H1 (cell line): ENCODE measurements at regions of chr17 and their contacts with region 1.

Region 1: GRCh38 chr17:39547713-39548478 is 59.8 kb downstream of the NEUROD2 start:
- DNase-seq: peak in 1 of 2 experiments; percentile 98
- H3K4me3 ChIP-seq: no peak overlapping the region
- H3K27ac ChIP-seq: no peak overlapping the region
- H3K4me1 ChIP-seq: no peaks in the 10 kb centered on the region
- H3K27me3 ChIP-seq: no peaks in the 10 kb centered on the region
- CTCF ChIP-seq: peak; percentile 90 to 92 (median 92)
- EP300 ChIP-seq: no peak
- POLR2A ChIP-seq: no peak
- RAD21 ChIP-seq: peak; percentile 87 to 91

Region 2: GRCh38 chr17:39527220-39527813 is 20.6 kb before region 1 on chr17:
- CTCF ChIA-PET with region 1: interaction called, 19 read pairs
- POLR2A ChIA-PET with region 1: no interaction called
- DNase-seq: no peak
- H3K4me3 ChIP-seq: no peak overlapping the region
- H3K27ac ChIP-seq: no peak overlapping the region
- H3K4me1 ChIP-seq: no peaks in the 10 kb centered on the region
- H3K27me3 ChIP-seq: no peaks in the 10 kb centered on the region
- CTCF ChIP-seq: peak in 2 of 3 experiments; percentile 38 to 68; a peak in 2 of 4 replicates
- EP300 ChIP-seq: no peak
- POLR2A ChIP-seq: no peak
- RAD21 ChIP-seq: peak; percentile 30 to 42; a peak in 3 of 4 replicates

Region 3: DNA sequence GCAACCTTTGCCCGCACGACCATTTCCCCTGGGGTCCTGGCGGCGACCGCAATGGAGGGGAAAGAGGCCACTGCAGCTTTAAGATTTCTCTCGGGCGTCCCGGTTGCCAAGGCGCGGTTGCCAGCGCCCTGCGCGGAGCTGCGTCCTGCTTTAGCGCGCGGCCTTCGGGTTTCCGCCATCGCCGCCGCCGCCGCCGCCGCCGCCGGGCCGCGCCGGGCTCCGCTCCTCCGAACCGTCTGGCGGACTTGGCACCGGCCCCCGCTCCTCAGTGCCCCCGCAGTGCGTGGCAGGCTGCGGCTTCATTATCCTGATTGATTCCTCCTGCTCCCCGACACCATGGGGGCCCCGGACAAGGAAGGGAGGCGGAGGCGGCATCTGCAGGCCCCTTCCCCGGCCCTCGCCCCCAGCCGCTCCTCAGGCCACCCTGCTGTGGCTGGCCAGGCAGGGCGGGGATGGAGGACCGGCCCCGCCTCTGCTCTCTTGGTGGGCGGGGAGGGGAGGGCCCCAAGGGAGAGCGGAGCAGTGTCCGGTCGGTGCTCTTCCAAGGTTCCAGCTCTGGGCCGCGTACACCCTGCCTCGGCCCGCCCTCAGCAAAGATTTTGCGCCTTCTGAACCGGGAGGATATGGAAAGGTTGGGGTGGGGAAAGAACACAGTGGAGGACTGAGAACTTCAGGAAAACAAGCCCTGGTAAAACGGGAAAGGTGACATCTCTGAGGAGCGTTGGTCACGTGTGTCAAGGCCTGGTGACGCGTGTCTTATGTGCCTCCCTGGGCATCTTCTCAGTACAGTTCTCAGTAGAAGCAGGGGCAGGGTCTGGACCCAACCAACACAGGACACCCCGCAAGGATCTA is 25.8 kb after region 1 on chr17:
- CTCF ChIA-PET with region 1: interaction called, 216 read pairs
- POLR2A ChIA-PET with region 1: interaction called, 3 read pairs
- DNase-seq: peak in 1 of 2 experiments; percentile 84
- H3K4me3 ChIP-seq: peak overlapping the region; percentile 48 to 85 (median 56)
- H3K27ac ChIP-seq: no peak overlapping the region
- H3K4me1 ChIP-seq: peaks cover 2 to 12% (median 5%) of the 10 kb centered on the region in 4 experiments
- H3K27me3 ChIP-seq: peaks cover 0 to 4% (median 3%) of the 10 kb centered on the region in 4 experiments; a peak in 5 of 7 replicates
- CTCF ChIP-seq: no peak
- EP300 ChIP-seq: peak in 1 of 2 experiments; percentile 50; a peak in 1 of 3 replicates
- POLR2A ChIP-seq: no peak; a peak in 1 of 3 replicates
- RAD21 ChIP-seq: no peak

Region 4: DNA sequence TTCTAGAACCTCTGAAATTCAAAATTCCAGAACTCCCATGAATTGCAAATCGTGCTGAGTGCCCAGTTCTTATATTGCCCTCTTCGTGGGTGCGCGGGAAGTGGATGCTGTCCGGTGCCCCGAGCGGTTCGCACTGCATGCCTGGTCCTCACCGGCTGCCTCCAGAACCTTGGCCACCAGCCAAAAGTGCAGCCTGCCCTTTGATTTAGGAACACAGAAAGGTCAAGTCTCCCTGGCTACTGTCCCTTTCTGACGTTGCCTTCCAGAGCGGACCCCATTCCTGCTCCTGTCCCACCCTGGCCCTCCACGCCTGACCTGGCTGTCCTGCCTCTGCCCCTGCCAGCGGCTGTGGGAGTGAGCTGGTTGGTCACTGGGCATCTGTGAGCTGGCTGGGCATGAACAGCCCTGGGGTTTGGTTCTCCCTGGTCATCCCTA is 50.2 kb after region 1 on chr17:
- CTCF ChIA-PET with region 1: interaction called, 49 read pairs
- POLR2A ChIA-PET with region 1: interaction called, 5 read pairs
- DNase-seq: peak in 1 of 2 experiments; percentile 52
- H3K4me3 ChIP-seq: no peak overlapping the region
- H3K27ac ChIP-seq: no peak overlapping the region
- H3K4me1 ChIP-seq: peaks cover 5 to 39% (median 30%) of the 10 kb centered on the region in 4 experiments
- H3K27me3 ChIP-seq: peaks cover 78 to 100% (median 97%) of the 10 kb centered on the region in 4 experiments
- CTCF ChIP-seq: no peak
- EP300 ChIP-seq: no peak
- POLR2A ChIP-seq: no peak
- RAD21 ChIP-seq: no peak

Region 5: GRCh38 chr17:39621523-39622379 is 73.9 kb after region 1 on chr17:
- CTCF ChIA-PET with region 1: interaction called, 310 read pairs
- POLR2A ChIA-PET with region 1: interaction called, 5 read pairs
- DNase-seq: peak in 1 of 2 experiments; percentile 100
- H3K4me3 ChIP-seq: no peak overlapping the region
- H3K27ac ChIP-seq: no peak overlapping the region
- H3K4me1 ChIP-seq: peaks cover 0 to 20% (median 14%) of the 10 kb centered on the region in 4 experiments; a peak in 6 of 7 replicates
- H3K27me3 ChIP-seq: peaks cover 18 to 53% (median 50%) of the 10 kb centered on the region in 4 experiments
- CTCF ChIP-seq: peak; percentile 100
- EP300 ChIP-seq: peak in 1 of 2 experiments; percentile 49; a peak in 1 of 3 replicates
- POLR2A ChIP-seq: no peak
- RAD21 ChIP-seq: peak; percentile 96 to 97

Region 6: DNA sequence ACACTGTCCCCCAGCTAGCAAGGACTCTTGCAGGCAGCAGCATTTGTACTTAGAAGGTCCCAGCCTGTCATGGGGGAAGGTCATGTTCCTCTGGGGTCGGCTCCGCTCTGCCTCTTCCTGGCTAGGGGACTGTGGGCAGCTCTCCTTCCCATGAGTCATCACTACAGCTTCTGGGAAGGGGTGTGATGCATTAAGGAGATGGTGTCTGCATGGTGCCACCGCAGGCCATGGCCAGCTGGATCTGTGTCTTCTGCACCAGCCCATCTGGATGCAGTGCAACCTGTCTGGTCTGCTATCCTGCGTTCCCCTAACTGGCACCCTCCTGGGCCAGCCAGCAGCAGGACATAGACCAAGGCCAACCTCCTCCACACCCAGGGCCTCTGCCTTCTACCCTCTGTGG is 95.4 kb after region 1 on chr17:
- CTCF ChIA-PET with region 1: interaction called, 10 read pairs
- POLR2A ChIA-PET with region 1: no interaction called
- DNase-seq: no peak
- H3K4me3 ChIP-seq: no peak overlapping the region
- H3K27ac ChIP-seq: no peak overlapping the region
- H3K4me1 ChIP-seq: peaks cover 7 to 21% (median 12%) of the 10 kb centered on the region in 4 experiments
- H3K27me3 ChIP-seq: no peaks in the 10 kb centered on the region
- CTCF ChIP-seq: no peak
- EP300 ChIP-seq: no peak
- POLR2A ChIP-seq: no peak
- RAD21 ChIP-seq: no peak